ENCODE measurements at regions of chr4 and their contacts with region 1.

Region 1: DNA sequence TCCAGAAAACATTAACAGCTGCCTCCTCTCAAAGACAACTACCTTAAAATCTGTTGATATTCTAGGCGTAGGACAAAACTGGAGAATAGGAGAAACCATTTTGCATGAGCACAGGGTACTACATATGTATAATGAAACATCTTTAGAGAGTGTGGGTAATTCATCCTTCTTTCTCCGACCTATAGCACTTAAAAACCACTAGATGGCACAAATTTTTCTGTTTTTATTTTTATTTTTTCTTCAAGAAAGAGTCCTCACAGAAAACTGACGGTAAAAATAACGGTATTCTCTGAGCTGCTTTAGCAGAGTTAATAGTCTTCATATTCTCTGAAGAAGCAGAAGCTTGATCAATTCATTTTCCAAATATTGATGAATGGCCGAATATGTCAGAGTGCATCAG is 14.6 kb downstream of the SMIM31 start:
- DNase-seq: no peak
- H3K4me3 ChIP-seq: no peak overlapping the region
- H3K27ac ChIP-seq: no peak overlapping the region
- H3K4me1 ChIP-seq: no peaks in the 10 kb centered on the region
- H3K27me3 ChIP-seq: no peaks in the 10 kb centered on the region
- CTCF ChIP-seq: peak in 2 of 3 experiments; percentile 10 to 41; a peak in 2 of 4 replicates
- EP300 ChIP-seq: no peak
- POLR2A ChIP-seq: no peak
- RAD21 ChIP-seq: peak; percentile 27 to 28; a peak in 3 of 4 replicates

Region 2: GRCh38 chr4:164501074-164501473 is 267.4 kb before region 1 on chr4:
- CTCF ChIA-PET with region 1: no interaction called
- POLR2A ChIA-PET with region 1: no interaction called
- DNase-seq: no peak
- H3K4me3 ChIP-seq: no peak overlapping the region
- H3K27ac ChIP-seq: no peak overlapping the region
- H3K4me1 ChIP-seq: no peaks in the 10 kb centered on the region
- H3K27me3 ChIP-seq: peaks cover 0 to 1% (median 0%) of the 10 kb centered on the region in 4 experiments; a peak in 1 of 7 replicates
- CTCF ChIP-seq: no peak
- EP300 ChIP-seq: no peak
- POLR2A ChIP-seq: no peak
- RAD21 ChIP-seq: no peak

Region 3: DNA sequence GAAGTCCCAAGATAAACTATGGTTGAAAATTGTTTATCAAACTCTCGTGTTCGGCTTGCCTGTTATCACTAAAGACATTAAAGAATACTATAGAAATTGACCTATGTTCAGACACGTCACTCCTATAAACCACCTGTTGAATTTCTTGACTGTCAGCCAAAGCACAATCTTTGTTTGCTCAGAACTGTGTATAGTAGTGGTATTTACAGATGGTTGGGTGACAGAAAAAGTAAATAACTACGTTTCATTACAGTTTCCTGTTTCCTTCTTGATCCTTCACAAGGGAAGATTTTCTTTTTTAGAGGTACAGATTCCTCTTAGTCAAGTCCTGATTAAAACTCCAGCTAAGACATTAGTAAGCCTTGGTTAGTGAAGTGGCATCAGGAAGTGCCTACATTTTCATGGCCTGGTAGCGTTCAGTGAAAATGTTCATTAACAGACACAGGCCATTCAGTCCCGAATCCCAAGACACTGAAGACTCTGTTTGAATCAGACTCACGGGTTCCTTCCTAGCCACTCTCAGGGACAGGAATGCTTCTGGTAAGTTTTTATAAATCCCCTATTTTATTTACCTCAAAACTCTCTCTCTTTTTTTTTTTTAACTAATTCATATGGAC is 14.5 kb before region 1 on chr4 and contains the start of gene SMIM31:
- CTCF ChIA-PET with region 1: interaction called, 12 read pairs
- POLR2A ChIA-PET with region 1: no interaction called
- DNase-seq: no peak
- H3K4me3 ChIP-seq: no peak within 1 kb of the TSS
- H3K27ac ChIP-seq: no peak within 1 kb of the TSS
- H3K4me1 ChIP-seq: no peaks in the 10 kb centered on the region
- H3K27me3 ChIP-seq: no peaks in the 10 kb centered on the region
- CTCF ChIP-seq: no peak
- EP300 ChIP-seq: no peak
- POLR2A ChIP-seq: no peak
- RAD21 ChIP-seq: no peak
- total RNA-seq, gene SMIM31: not detected in 2 replicates

Region 4: DNA sequence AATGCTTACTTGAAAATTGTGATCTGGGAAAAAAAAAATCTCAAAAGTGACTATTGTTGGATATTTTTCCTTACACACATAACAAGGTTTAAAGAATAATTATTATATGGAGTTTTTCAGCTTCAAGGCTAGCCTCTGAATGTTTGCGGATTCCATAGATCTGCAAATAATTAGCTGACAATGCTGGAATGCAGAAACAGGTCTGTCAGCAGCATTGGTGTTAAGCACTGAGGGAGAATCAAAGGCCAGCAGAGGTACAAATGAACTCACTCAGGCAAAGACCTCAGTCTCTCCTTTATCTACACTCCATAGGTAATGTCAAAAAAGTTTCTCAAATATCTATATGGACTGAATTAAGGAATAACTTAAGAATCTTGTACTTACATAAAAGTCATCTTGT is 20.5 kb after region 1 on chr4:
- CTCF ChIA-PET with region 1: interaction called, 12 read pairs
- POLR2A ChIA-PET with region 1: no interaction called
- DNase-seq: no peak
- H3K4me3 ChIP-seq: no peak overlapping the region
- H3K27ac ChIP-seq: no peak overlapping the region
- H3K4me1 ChIP-seq: peaks cover 0 to 2% (median under 1%) of the 10 kb centered on the region in 4 experiments; a peak in 2 of 7 replicates
- H3K27me3 ChIP-seq: no peaks in the 10 kb centered on the region
- CTCF ChIP-seq: no peak
- EP300 ChIP-seq: no peak
- POLR2A ChIP-seq: no peak
- RAD21 ChIP-seq: no peak

Region 5: DNA sequence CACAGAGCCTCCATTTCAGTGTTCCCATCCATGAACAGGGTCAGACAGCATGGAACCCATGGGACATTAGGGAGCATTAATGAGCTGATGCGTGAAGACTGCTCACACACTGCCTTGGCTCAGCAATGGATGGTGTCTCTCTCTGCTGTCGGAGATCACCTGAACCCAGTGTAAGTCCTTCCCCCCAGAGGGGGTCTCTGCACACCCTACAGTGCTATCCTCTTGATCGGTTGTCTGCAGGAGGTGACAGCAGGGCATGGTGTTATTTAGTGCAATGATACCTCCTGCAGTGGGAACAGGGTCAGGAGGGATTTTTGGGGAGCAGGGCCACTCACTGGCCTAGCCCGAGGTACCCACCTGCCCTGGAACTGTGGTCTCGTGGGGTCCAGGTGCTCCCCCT is 134.1 kb after region 1 on chr4:
- CTCF ChIA-PET with region 1: interaction called, 32 read pairs
- POLR2A ChIA-PET with region 1: interaction called, 4 read pairs
- DNase-seq: no peak
- H3K4me3 ChIP-seq: no peak overlapping the region
- H3K27ac ChIP-seq: no peak overlapping the region
- H3K4me1 ChIP-seq: peaks cover 0 to 8% (median 0%) of the 10 kb centered on the region in 4 experiments; a peak in 4 of 7 replicates
- H3K27me3 ChIP-seq: no peaks in the 10 kb centered on the region
- CTCF ChIP-seq: no peak
- EP300 ChIP-seq: no peak
- POLR2A ChIP-seq: no peak
- RAD21 ChIP-seq: no peak

Region 6: DNA sequence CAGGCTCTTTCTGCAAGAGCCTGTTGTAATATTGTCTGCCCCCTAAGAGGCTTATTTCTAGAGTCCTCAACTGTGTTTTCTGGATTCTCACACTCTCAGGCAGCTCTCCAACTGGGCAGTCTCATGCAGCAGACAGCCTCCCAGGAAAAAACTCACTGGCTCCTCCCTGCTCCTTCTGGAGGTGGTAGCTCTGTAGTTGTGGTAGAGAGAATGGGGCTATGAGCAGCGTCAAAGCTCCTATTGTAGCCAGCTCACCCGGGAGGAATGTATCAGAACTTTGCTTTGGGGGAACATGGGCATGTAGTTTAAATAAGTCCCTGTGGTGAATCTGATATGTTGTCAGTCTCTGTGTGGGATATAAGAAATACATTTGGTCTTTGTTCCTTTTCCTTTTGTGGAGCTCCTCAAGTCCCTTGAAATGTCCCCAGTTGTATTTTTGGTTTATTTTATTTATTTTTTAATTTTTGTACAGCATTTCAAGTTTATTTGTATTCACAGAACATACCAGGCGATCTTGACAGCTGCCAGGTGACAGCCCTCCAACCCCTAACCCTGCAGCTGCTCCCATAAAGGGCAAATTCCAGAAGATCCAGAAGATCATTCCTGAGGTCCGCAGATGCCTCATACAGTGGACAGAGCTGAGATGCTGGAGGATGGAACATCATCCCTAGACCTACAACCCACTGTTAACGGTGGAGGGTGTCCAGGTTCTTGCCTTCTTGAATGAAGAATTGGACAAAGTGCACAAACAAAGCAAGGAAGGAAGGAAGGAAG is 163.2 kb after region 1 on chr4:
- CTCF ChIA-PET with region 1: interaction called, 56 read pairs
- POLR2A ChIA-PET with region 1: no interaction called
- DNase-seq: no peak
- H3K4me3 ChIP-seq: no peak overlapping the region
- H3K27ac ChIP-seq: no peak overlapping the region
- H3K4me1 ChIP-seq: no peaks in the 10 kb centered on the region; a peak in 1 of 7 replicates
- H3K27me3 ChIP-seq: no peaks in the 10 kb centered on the region
- CTCF ChIP-seq: no peak
- EP300 ChIP-seq: no peak
- POLR2A ChIP-seq: no peak
- RAD21 ChIP-seq: no peak

Region 7: DNA sequence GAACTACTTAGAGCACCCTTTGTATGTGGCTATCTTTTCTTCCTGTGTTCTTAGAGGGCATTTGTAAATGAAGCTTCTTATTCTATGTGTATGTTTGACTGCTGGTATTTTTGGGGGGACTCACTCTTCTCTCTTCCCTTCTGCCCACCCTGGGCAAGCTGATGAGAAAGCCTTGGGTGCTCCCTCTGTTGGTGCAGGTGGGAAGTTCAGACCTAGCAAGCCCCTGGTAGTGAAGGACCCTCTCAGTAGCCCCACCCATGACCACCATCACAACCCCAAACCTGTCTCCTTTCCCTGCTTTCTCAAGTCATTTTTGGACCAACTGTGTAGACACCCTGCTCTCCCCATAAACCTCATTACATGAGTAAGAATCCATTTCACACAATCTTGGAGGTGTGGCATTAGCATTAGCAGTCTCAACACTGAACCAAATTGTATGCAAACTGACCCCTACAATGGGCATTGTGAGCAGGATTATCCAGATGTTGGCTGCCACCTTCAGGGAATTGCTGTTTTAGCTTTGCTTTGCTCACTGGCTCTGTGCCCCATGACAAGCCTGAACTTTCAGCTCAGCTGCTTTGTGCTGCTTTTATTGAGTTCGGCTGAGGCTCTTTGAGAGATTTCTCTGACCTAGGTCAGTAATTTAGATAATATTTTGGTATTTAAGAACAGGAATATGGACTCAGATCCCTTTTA is 181.1 kb after region 1 on chr4:
- CTCF ChIA-PET with region 1: interaction called, 56 read pairs
- POLR2A ChIA-PET with region 1: no interaction called
- DNase-seq: peak in 1 of 2 experiments; percentile 80
- H3K4me3 ChIP-seq: no peak overlapping the region
- H3K27ac ChIP-seq: no peak overlapping the region; the same call in 1 of the 2 replicates
- H3K4me1 ChIP-seq: no peaks in the 10 kb centered on the region
- H3K27me3 ChIP-seq: no peaks in the 10 kb centered on the region
- CTCF ChIP-seq: peak; percentile 59 to 76 (median 62)
- EP300 ChIP-seq: no peak
- POLR2A ChIP-seq: no peak
- RAD21 ChIP-seq: peak; percentile 57 to 66

Region 8: DNA sequence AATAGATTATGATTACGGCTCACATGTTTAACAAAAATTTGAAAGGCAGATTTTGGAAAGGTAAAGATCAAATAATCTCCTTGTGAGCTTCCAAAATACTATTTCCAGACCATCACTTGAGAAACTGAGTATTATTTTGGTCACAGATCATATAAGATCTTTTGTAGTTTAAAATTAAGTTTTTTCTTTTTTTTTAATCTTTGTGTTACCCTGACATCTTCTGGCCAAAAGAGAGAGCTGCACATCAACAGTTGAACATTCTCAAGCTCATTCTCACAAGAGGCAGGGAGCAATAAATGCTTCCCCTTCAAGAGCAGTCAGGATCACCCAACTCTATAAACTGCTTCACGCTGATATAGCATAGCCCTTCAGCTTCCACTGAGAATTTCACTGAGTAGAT is 328.3 kb after region 1 on chr4:
- CTCF ChIA-PET with region 1: interaction called, 19 read pairs
- POLR2A ChIA-PET with region 1: no interaction called
- DNase-seq: no peak
- H3K4me3 ChIP-seq: no peak overlapping the region
- H3K27ac ChIP-seq: no peak overlapping the region
- H3K4me1 ChIP-seq: no peaks in the 10 kb centered on the region
- H3K27me3 ChIP-seq: no peaks in the 10 kb centered on the region
- CTCF ChIP-seq: peak in 2 of 3 experiments; percentile 40 to 50; a peak in 2 of 4 replicates
- EP300 ChIP-seq: no peak
- POLR2A ChIP-seq: no peak
- RAD21 ChIP-seq: peak; percentile 64 to 65